ENCODE measurements at regions of chr19 and their contacts with region 1.

Region 1: DNA sequence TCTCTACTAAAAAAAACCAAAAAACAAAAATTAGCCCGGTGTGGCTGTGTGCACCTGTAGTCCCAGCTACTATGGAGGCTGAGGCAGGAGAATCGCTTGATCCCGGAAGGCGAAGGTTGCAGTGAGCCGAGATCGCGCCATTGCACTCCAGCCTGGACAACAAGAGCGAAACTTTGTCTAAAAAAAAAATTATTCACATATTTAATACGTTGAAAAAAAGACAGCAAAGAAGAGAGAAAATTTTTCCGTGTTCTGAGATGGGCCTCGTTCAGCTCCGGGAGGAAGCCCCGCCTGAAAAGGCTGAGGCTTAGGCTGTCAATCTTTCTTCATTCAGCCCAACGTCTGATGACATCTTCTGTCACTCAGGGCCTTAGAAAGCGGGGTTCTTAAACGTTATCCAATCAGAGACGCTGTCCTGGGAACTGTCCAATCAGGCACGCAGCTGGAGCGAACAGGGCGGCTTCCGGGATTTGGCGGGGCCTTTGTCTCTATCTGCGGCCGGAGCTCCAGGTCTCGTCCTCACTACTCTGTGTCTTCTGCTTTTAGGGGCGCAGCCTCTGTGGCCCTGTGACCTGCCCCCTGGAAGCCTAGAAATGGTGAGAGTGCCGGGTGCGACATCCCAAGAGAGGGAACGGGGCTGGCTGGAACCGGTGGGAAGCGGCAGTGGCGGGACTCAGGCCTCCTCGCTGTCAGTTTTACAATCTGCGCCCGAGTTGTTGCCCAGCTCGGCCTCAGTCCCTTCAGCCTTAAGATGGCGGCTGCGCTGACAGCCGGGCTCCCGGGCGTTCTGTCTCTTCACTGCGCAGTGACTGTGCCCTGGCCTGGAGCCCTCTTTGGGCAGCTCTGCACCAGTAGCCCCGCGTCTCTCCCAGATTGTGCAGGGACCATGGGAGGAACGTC is at the start of gene ZNF726:
- DNase-seq: peak; percentile 94
- ATAC-seq: peak; percentile 99
- H3K4me3 Mint-ChIP-seq: peak within 1 kb of the TSS; percentile 94
- H3K27ac Mint-ChIP-seq: peak within 1 kb of the TSS; percentile 93
- H3K4me1 Mint-ChIP-seq: peaks cover 14% of the 10 kb centered on the region
- H3K27me3 Mint-ChIP-seq: no peaks in the 10 kb centered on the region
- total RNA-seq, gene ZNF726: 19.1 to 20.2 TPM

Region 2: GRCh38 chr19:23395041-23395721 is 519.5 kb before region 1 on chr19 and contains the start of gene ZNF91:
- CTCF ChIA-PET with region 1: no interaction called
- POLR2A ChIA-PET with region 1: no interaction called
- intact Hi-C with region 1: loop called in 1 of 2 experiments (anchors 1 kb)
- DNase-seq: peak; percentile 96
- ATAC-seq: peak; percentile 96
- H3K4me3 Mint-ChIP-seq: peak within 1 kb of the TSS; percentile 98
- H3K27ac Mint-ChIP-seq: peak within 1 kb of the TSS; percentile 99
- H3K4me1 Mint-ChIP-seq: peaks cover 31% of the 10 kb centered on the region
- H3K27me3 Mint-ChIP-seq: no peaks in the 10 kb centered on the region
- total RNA-seq, gene ZNF91: 35.7 to 45.5 TPM

Region 3: DNA sequence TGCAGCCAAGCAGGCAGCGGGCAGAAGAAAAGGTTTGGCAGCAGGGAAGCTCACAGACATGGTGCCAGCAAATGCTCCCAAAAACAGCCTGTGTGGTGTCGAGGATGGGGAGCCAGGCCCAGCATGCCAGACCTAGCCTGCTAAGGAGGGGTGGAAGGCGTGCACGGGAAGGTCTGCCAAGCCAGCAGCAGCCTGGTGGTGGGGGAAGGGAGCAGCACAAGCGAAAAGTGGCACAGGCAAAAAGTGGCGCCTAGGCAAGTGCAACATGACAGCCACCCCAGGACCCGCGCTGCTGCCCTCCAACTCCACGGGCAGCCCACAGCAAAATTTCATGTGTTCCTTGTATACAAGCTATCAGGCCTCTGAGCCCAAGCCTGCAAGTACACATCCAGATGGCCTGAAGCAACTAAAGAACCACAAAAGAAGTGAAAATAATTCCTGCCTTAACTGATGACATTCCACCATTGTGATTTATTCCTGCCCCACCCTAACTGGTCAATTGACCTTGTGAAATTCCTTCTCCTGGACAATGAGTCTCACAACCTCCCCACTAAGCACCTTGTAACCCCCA is 365.4 kb before region 1 on chr19:
- CTCF ChIA-PET with region 1: no interaction called
- POLR2A ChIA-PET with region 1: no interaction called
- intact Hi-C with region 1: no loop called
- DNase-seq: no peak
- ATAC-seq: no peak
- H3K4me3 Mint-ChIP-seq: no peak overlapping the region
- H3K27ac Mint-ChIP-seq: no peak overlapping the region
- H3K4me1 Mint-ChIP-seq: no peaks in the 10 kb centered on the region
- H3K27me3 Mint-ChIP-seq: no peaks in the 10 kb centered on the region

Region 4: GRCh38 chr19:23686621-23687423 is 227.8 kb before region 1 on chr19 and contains the start of gene ZNF675:
- CTCF ChIA-PET with region 1: no interaction called
- POLR2A ChIA-PET with region 1: interaction called, 17 read pairs
- intact Hi-C with region 1: loop called (anchors 1 to 5 kb)
- DNase-seq: peak; percentile 95
- ATAC-seq: peak; percentile 97
- H3K4me3 Mint-ChIP-seq: peak within 1 kb of the TSS; percentile 98
- H3K27ac Mint-ChIP-seq: peak within 1 kb of the TSS; percentile 98
- H3K4me1 Mint-ChIP-seq: peaks cover 41% of the 10 kb centered on the region
- H3K27me3 Mint-ChIP-seq: no peaks in the 10 kb centered on the region
- total RNA-seq, gene ZNF675: 19.1 to 22.8 TPM

Region 5: GRCh38 chr19:23946569-23946968 is 31.9 kb after region 1 on chr19:
- CTCF ChIA-PET with region 1: no interaction called
- POLR2A ChIA-PET with region 1: no interaction called
- intact Hi-C with region 1: loop called in 1 of 2 experiments (anchors 2 kb)
- DNase-seq: no peak
- ATAC-seq: no peak
- H3K4me3 Mint-ChIP-seq: no peak overlapping the region
- H3K27ac Mint-ChIP-seq: no peak overlapping the region
- H3K4me1 Mint-ChIP-seq: peaks cover 8% of the 10 kb centered on the region
- H3K27me3 Mint-ChIP-seq: no peaks in the 10 kb centered on the region

Region 6: GRCh38 chr19:24086974-24087595 is 172.4 kb after region 1 on chr19 and contains the start of gene ZNF254:
- CTCF ChIA-PET with region 1: interaction called, 3 read pairs
- POLR2A ChIA-PET with region 1: interaction called, 3 read pairs
- intact Hi-C with region 1: loop called in 1 of 2 experiments (anchors 1 kb)
- DNase-seq: peak; percentile 93
- ATAC-seq: peak; percentile 100
- H3K4me3 Mint-ChIP-seq: peak within 1 kb of the TSS; percentile 94
- H3K27ac Mint-ChIP-seq: peak within 1 kb of the TSS; percentile 97
- H3K4me1 Mint-ChIP-seq: peaks cover 6% of the 10 kb centered on the region
- H3K27me3 Mint-ChIP-seq: no peaks in the 10 kb centered on the region
- total RNA-seq, gene ZNF254: 8.8 to 9.6 TPM

Measured in activated CD4-positive, alpha-beta T cell treated with anti-CD3 and anti-CD28 coated beads for 36 hours (primary cell).